Transverse colon (tissue), 4 donors: ENCODE measurements at regions of chr12 and their contacts with region 1.

Region 1: GRCh38 chr12:121992059-121992879 is 29.4 kb upstream of the BCL7A start:
- DNase-seq: no peak
- H3K4me3 ChIP-seq: no peak overlapping the region
- H3K27ac ChIP-seq: no peak overlapping the region
- H3K4me1 ChIP-seq: no peaks in the 10 kb centered on the region
- H3K27me3 ChIP-seq: no peaks in the 10 kb centered on the region
- CTCF ChIP-seq: no peak
- EP300 ChIP-seq: no peak
- POLR2A ChIP-seq: no peak

Region 2: DNA sequence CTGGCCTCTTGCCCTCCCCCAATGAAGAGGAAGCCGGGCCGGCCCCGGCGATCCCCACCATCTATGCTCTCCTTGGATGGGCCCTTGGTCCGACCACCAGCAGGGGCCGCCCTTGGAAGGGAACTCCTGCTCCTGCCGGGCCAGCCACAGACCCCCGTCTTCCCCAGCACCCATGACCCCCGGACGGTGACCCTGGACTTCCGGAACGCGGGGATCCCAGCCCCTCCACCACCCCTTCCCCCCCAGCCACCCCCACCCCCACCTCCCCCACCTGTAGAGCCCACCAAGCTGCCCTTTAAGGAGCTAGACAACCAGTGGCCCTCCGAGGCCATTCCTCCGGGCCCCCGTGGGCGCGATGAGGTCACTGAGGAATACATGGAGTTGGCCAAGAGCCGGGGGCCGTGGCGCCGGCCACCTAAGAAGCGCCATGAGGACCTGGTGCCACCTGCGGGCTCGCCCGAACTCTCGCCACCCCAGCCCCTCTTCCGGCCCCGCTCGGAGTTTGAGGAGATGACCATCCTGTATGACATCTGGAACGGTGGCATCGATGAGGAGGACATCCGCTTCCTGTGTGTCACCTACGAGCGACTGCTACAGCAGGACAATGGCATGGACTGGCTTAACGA is 169.1 kb before region 1 on chr12:
- in situ Hi-C with region 1: no loop called
- intact Hi-C with region 1: no loop called
- DNase-seq: no peak
- H3K4me3 ChIP-seq: no peak overlapping the region
- H3K27ac ChIP-seq: no peak overlapping the region
- H3K4me1 ChIP-seq: no peaks in the 10 kb centered on the region
- H3K27me3 ChIP-seq: no peaks in the 10 kb centered on the region
- CTCF ChIP-seq: no peak
- EP300 ChIP-seq: no peak
- POLR2A ChIP-seq: no peak

Region 3: GRCh38 chr12:122721057-122721545 is 728.8 kb after region 1 on chr12:
- in situ Hi-C with region 1: no loop called
- intact Hi-C with region 1: loop called (anchors 10 kb)
- DNase-seq: no peak
- H3K4me3 ChIP-seq: no peak overlapping the region
- H3K27ac ChIP-seq: no peak overlapping the region
- H3K4me1 ChIP-seq: no peaks in the 10 kb centered on the region
- H3K27me3 ChIP-seq: no peaks in the 10 kb centered on the region
- CTCF ChIP-seq: no peak
- EP300 ChIP-seq: no peak
- POLR2A ChIP-seq: no peak